BJ (cell line): ENCODE measurements at regions of chr2 and their contacts with region 1.

Region 1: GRCh38 chr2:209334198-209335017 is 89.4 kb upstream of the MAP2 start:
- DNase-seq: no peak
- H3K4me3 ChIP-seq: no peak overlapping the region
- H3K27me3 ChIP-seq: no peaks in the 10 kb centered on the region
- CTCF ChIP-seq: peak; percentile 90

Region 2: DNA sequence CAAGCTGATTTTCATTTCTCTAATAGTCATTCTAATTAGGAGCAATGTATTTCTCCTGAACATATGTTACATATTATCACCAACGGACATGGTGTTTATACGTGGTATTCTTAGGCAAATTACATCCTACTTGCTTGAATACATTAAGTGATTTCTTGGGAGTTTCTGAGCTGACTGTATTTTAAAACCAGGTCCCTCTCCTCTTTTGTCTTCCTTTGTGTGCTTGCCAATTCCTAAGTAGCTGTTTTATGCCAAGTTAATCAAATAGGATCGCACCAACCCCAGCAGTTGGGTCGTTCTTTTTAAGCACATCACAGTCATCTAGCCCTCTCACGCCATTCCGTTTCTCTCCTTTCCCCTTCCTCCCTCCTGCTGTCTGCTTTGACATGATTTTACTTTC is 14.0 kb after region 1 on chr2:
- CTCF ChIA-PET with region 1: interaction called, 21 read pairs
- POLR2A ChIA-PET with region 1: no interaction called
- DNase-seq: no peak
- H3K4me3 ChIP-seq: no peak overlapping the region
- H3K27me3 ChIP-seq: no peaks in the 10 kb centered on the region; the same call in 1 of the 2 replicates
- CTCF ChIP-seq: no peak

Region 3: DNA sequence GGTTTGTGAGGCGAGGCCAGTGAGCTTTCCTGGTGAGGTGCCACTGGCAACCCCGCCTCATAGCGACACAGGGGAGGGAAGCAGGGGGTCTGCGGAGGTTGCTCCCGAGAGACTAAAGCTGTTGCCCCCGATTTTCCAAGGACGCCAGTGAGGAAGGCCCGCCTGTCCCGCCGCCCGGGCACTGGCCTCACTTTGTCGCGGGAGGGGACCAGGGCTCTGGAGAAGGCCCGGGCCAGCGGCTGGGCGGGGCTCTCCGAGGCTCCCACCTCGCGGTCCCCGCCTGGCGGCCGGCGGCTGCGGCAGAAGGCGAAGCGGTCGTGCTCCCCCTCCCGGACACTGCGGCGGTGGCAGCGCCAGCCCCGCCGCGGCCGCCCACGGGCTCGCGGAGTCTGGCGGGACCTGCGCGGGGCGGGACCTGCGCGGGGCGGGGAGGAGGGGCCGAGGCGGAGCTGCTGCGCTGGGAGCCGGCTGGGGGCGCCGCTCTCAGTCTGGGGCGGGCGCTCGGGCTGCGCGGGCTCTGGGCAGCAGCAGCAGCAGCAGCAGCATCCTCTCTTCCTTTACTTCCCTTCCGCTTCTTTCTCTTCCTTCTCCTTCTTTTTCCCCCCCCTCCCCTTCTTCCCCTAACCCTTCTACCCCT is 89.3 kb after region 1 on chr2 and contains the start of gene MAP2:
- CTCF ChIA-PET with region 1: interaction called, 108 read pairs
- POLR2A ChIA-PET with region 1: no interaction called
- DNase-seq: peak; percentile 23
- H3K4me3 ChIP-seq: peak within 1 kb of the TSS; percentile 74
- H3K27me3 ChIP-seq: no peaks in the 10 kb centered on the region; the same call in 1 of the 2 replicates
- CTCF ChIP-seq: peak; percentile 49
- polyA plus RNA-seq, gene MAP2: 3.5 and 3.7 TPM in 2 replicates

Region 4: DNA sequence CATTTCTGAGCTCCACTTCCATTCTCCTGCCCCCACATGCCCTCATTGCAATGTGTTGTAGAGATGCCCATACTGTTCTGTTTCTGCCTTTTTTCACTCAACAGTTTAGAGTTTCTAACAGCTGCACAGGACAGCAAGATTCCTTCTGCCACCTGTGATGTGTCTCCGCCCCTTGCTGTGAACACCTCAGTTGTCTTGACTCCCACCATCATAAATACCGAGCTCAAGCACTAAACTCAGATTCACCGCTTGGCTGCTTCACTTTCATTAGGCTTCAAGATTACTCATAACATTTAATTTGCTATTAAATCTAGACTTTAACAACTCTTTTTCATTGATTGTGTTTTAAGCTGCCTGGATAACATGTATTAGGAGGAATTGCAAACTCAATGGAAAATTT is 230.4 kb after region 1 on chr2:
- CTCF ChIA-PET with region 1: interaction called, 12 read pairs
- POLR2A ChIA-PET with region 1: no interaction called
- DNase-seq: no peak
- H3K4me3 ChIP-seq: no peak overlapping the region
- H3K27me3 ChIP-seq: no peaks in the 10 kb centered on the region
- CTCF ChIP-seq: no peak

Region 5: GRCh38 chr2:210873631-210874030 is 1539.2 kb after region 1 on chr2:
- CTCF ChIA-PET with region 1: no interaction called
- POLR2A ChIA-PET with region 1: no interaction called
- DNase-seq: no peak
- H3K4me3 ChIP-seq: no peak overlapping the region
- H3K27me3 ChIP-seq: no peaks in the 10 kb centered on the region
- CTCF ChIP-seq: no peak